Psoas muscle (tissue), 8 donors: ENCODE measurements at regions of chr9 and their contacts with region 1.

Region 1: GRCh38 chr9:94945197-94946144 is 219.0 kb downstream of the AOPEP start:
- DNase-seq: peak; percentile 60 to 68
- ATAC-seq: peak; percentile 81 to 85 (median 84)
- H3K4me3 ChIP-seq: peak overlapping the region; percentile 40
- H3K27ac ChIP-seq: peak overlapping the region; percentile 77
- H3K4me1 ChIP-seq: peaks cover 66% of the 10 kb centered on the region
- H3K27me3 ChIP-seq: no peaks in the 10 kb centered on the region
- CTCF ChIP-seq: no peak

Region 2: DNA sequence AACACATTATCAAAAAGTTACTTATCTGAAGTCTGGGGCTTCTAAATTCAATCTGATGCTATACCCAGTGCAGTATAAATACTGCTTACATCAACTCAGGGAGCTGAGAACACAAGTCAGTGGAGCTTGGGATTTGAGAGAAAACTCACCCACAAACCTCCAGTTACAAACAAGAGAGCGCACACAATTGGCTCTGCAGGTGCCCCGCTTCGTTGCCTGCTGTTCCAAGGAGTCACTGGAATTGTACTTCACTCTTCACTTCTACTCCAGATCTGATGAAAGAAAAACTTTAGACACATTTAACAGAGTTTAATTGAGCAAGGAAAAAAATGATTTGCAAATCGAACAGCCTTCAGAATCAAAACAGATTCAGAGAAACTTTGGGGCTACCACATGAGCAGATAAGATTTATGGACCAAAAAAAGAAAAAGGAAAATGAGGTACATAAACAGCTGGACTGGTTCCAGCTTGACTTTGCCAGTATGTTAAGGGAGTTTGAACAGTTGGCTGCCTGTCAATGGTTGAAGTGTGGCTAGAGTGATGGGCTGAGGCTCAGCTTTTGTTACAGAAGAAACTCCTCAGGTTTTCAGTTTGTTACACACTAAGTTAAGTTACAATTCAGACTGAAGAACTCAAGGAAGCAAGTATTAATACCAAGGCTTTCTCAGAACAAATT is 62.4 kb before region 1 on chr9:
- intact Hi-C with region 1: no loop called
- DNase-seq: no peak
- ATAC-seq: no peak
- H3K4me3 ChIP-seq: no peak overlapping the region
- H3K27ac ChIP-seq: no peak overlapping the region
- H3K4me1 ChIP-seq: peaks cover 13% of the 10 kb centered on the region
- H3K27me3 ChIP-seq: no peaks in the 10 kb centered on the region
- CTCF ChIP-seq: no peak

Region 3: GRCh38 chr9:94925861-94926800 is 19.3 kb before region 1 on chr9:
- intact Hi-C with region 1: loop called in 1 of 2 experiments (anchors 2 kb)
- DNase-seq: no peak
- ATAC-seq: no peak
- H3K4me3 ChIP-seq: no peak overlapping the region
- H3K27ac ChIP-seq: no peak overlapping the region
- H3K4me1 ChIP-seq: peaks cover 26% of the 10 kb centered on the region
- H3K27me3 ChIP-seq: no peaks in the 10 kb centered on the region
- CTCF ChIP-seq: no peak